ENCODE measurements at regions of chr1 and their contacts with region 1.

Region 1: DNA sequence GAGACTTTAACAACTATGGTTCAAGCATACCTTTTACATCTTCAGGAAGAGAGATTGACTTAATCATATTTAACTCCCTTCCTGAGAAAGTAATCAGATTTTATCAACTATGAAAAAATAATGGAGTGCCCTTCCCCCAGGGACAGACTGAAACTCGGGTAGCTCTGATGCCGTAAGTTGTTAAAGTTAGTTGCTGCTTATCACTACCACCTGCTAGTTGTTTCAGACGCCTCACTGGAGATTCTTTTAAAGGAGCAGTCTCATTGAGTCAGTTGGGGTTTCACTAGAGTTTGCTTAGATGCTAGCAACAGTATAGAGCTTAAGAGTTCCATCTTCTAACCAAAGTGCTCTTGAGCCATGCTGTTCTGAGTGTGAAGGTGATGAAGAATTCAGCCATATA is 17.0 kb upstream of the TRAF5 start:
- H3K4me3 Mint-ChIP-seq: no peak overlapping the region
- H3K27ac Mint-ChIP-seq: no peak overlapping the region
- H3K4me1 Mint-ChIP-seq: peaks cover 6% of the 10 kb centered on the region
- H3K27me3 Mint-ChIP-seq: no peaks in the 10 kb centered on the region

Region 2: GRCh38 chr1:211267204-211267857 is 42.3 kb before region 1 on chr1:
- intact Hi-C with region 1: loop called (anchors 5 kb)
- H3K4me3 Mint-ChIP-seq: no peak overlapping the region
- H3K27ac Mint-ChIP-seq: no peak overlapping the region
- H3K4me1 Mint-ChIP-seq: peaks cover 5% of the 10 kb centered on the region
- H3K27me3 Mint-ChIP-seq: no peaks in the 10 kb centered on the region

Measured in dendritic cell treated with granulocyte-macrophage colony-stimulating factor and Interleukin-4, amounts not matched to agents 40 ng/mL and 50 ng/mL, for 4 days (primary cell).